ENCODE measurements at regions of chr5 and their contacts with region 1.

Region 1: GRCh38 chr5:144203750-144204596 is 33.3 kb downstream of the KCTD16 start:
- DNase-seq: peak; percentile 65
- H3K4me3 Mint-ChIP-seq: no peak overlapping the region
- H3K27ac Mint-ChIP-seq: no peak overlapping the region
- H3K4me1 Mint-ChIP-seq: peaks cover 17% of the 10 kb centered on the region
- H3K27me3 Mint-ChIP-seq: peaks cover 38% of the 10 kb centered on the region

Region 2: DNA sequence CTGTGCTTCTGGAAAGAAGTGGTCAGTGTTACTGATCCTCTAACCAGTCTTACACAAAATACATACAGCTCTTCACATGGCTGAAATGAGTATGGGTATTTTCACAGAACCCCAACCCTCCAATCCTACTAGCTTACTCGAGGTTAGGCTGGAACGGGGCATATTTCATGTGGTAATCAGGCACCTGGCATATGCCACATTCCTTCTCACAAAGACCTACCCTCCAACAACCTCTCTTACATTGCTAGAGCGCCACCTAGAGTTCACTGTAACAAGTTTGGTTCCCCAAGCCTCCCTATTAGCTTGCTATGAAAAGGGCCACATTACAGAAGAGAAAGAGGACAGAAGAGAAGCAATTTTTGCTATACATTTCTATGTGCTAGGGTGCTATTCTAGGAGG is 1033.9 kb after region 1 on chr5:
- CTCF ChIA-PET with region 1: no interaction called
- intact Hi-C with region 1: loop called (anchors 5 kb)
- DNase-seq: peak; percentile 11
- H3K4me3 Mint-ChIP-seq: no peak overlapping the region
- H3K27ac Mint-ChIP-seq: no peak overlapping the region
- H3K4me1 Mint-ChIP-seq: no peaks in the 10 kb centered on the region
- H3K27me3 Mint-ChIP-seq: no peaks in the 10 kb centered on the region

Region 3: GRCh38 chr5:145681686-145682085 is 1477.7 kb after region 1 on chr5:
- CTCF ChIA-PET with region 1: no interaction called
- intact Hi-C with region 1: loop called (anchors 5 kb)
- DNase-seq: peak; percentile 62
- H3K4me3 Mint-ChIP-seq: no peak overlapping the region
- H3K27ac Mint-ChIP-seq: no peak overlapping the region
- H3K4me1 Mint-ChIP-seq: no peaks in the 10 kb centered on the region
- H3K27me3 Mint-ChIP-seq: no peaks in the 10 kb centered on the region

Measured in activated naive CD4-positive, alpha-beta T cell treated with anti-CD3 and anti-CD28 coated beads for 36 hours (primary cell).